Activated T-helper 1 cell treated with anti-CD3 and anti-CD28 coated beads, Interleukin-12 subunit alpha, Interleukin-12 subunit beta, Interleukin-2, Interleukin-4 antibody, amounts not matched to agents 30 ng/mL and 10 ng/mL and 1 ng/mL, durations not matched to agents 14 hours and 24 hours and 36 hours (primary cell): ENCODE measurements at regions of chr1 and their contacts with region 1.

Region 1: DNA sequence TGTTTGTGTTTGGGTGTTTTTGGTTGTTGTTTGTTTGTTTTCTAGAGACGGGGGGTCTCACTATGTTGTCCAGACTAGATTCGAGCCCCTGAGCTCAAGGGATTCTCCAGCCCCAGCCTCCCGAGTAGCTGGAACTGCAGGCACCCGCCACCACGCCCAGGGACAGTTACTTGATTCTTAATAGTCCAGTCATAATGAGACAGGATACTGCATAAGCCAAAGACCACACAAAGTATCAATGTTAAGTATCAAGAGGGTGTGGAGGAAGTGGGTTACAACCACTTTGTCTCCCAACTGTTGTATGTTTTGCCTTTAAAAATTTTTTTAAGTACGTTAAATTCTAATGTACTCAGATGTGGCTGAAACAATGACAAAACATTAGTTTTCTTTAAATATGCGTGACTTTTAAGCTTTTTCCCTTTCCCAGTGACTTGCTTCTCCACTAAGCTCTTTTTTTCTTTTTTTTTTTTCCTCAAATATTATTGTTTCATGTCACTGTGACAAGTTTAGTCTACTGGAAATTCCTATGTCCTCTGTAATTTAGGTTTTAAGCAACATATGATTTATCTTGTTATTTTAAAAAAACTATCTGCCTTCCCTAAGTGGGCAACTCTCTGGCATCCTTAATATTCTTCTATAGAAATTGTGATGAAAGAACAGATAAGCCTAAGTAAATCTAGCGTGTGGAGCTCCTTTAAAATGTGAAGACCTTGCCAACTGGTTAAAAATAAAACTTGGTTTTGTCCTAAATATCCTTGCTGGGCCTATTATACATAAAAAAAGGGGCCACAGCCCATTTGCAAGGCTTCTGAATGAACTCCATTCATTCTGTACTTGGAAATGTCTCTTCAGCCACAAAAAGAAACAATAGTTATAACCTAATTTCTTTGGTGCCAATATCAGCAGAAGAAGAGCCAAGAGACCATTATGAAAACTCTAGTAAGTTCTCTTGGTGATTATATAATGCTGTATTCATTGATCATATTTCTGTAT is 56.2 kb upstream of the DPH5 start:
- DNase-seq: peak; percentile 58
- H3K4me3 Mint-ChIP-seq: peak overlapping the region; percentile 38
- H3K27ac Mint-ChIP-seq: peak overlapping the region; percentile 61
- H3K4me1 Mint-ChIP-seq: peaks cover 57% of the 10 kb centered on the region
- H3K27me3 Mint-ChIP-seq: no peaks in the 10 kb centered on the region

Region 2: DNA sequence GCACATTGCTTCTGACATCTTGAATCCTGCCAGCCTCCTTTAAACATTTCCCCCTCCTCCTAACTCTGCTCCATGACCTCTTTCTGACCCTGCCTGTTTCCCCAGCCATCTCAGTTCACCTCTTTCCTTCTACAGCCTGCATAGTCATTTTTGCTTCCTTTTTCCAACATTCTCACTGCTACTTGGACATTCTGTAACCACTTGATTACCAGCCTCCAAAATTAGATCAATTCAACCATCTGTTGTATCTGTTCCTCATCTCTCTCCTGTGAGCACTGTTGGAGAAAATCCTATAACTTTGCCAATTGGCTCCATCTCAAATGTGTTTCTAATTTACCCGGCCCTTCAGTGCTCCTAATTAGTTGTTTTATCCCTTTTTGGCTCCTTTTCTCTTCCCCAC is 571.3 kb before region 1 on chr1:
- intact Hi-C with region 1: no loop called
- DNase-seq: no peak
- H3K4me3 Mint-ChIP-seq: no peak overlapping the region
- H3K27ac Mint-ChIP-seq: no peak overlapping the region
- H3K4me1 Mint-ChIP-seq: no peaks in the 10 kb centered on the region
- H3K27me3 Mint-ChIP-seq: no peaks in the 10 kb centered on the region

Region 3: GRCh38 chr1:100941098-100941527 is 140.7 kb before region 1 on chr1:
- intact Hi-C with region 1: loop called (anchors 2 kb)
- DNase-seq: peak; percentile 17
- H3K4me3 Mint-ChIP-seq: peak overlapping the region; percentile 58
- H3K27ac Mint-ChIP-seq: peak overlapping the region; percentile 99
- H3K4me1 Mint-ChIP-seq: peaks cover 37% of the 10 kb centered on the region
- H3K27me3 Mint-ChIP-seq: peaks cover 3% of the 10 kb centered on the region

Region 4: DNA sequence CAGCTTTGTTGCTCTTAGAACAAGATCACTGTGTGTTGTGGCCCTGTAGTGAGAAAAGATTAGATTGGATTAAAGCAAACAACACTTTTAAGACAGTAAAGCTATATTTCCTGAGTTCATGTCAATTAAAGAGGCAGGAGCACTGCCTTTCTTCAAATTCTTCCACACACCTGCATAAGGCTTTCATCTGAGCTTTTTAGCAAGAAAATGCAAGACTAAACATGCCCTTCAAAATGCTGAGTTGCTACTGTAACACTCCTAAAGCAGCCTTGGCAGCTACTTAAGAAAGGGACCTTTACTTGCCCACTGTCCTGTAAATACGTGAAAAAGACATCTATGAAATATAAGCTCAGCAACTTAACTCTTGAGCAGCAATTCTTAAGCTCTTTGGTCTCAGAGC is 68.0 kb before region 1 on chr1:
- intact Hi-C with region 1: no loop called
- DNase-seq: no peak
- H3K4me3 Mint-ChIP-seq: no peak overlapping the region
- H3K27ac Mint-ChIP-seq: no peak overlapping the region
- H3K4me1 Mint-ChIP-seq: peaks cover 9% of the 10 kb centered on the region
- H3K27me3 Mint-ChIP-seq: no peaks in the 10 kb centered on the region

Region 5: GRCh38 chr1:101025657-101026504 is 55.9 kb before region 1 on chr1 and contains the start of gene DPH5:
- intact Hi-C with region 1: loop called (anchors 2 kb)
- DNase-seq: peak; percentile 84
- H3K4me3 Mint-ChIP-seq: peak within 1 kb of the TSS; percentile 93
- H3K27ac Mint-ChIP-seq: peak within 1 kb of the TSS; percentile 87
- H3K4me1 Mint-ChIP-seq: peaks cover 58% of the 10 kb centered on the region
- H3K27me3 Mint-ChIP-seq: no peaks in the 10 kb centered on the region
- total RNA-seq, gene DPH5: 31.7 and 32.2 TPM in 2 replicates

Region 6: GRCh38 chr1:101066260-101066936 is 15.4 kb before region 1 on chr1:
- intact Hi-C with region 1: loop called (anchors 2 kb)
- DNase-seq: no peak
- H3K4me3 Mint-ChIP-seq: no peak overlapping the region
- H3K27ac Mint-ChIP-seq: no peak overlapping the region
- H3K4me1 Mint-ChIP-seq: peaks cover 45% of the 10 kb centered on the region
- H3K27me3 Mint-ChIP-seq: no peaks in the 10 kb centered on the region